ENCODE measurements at regions of chr14 and their contacts with region 1.

Region 1: DNA sequence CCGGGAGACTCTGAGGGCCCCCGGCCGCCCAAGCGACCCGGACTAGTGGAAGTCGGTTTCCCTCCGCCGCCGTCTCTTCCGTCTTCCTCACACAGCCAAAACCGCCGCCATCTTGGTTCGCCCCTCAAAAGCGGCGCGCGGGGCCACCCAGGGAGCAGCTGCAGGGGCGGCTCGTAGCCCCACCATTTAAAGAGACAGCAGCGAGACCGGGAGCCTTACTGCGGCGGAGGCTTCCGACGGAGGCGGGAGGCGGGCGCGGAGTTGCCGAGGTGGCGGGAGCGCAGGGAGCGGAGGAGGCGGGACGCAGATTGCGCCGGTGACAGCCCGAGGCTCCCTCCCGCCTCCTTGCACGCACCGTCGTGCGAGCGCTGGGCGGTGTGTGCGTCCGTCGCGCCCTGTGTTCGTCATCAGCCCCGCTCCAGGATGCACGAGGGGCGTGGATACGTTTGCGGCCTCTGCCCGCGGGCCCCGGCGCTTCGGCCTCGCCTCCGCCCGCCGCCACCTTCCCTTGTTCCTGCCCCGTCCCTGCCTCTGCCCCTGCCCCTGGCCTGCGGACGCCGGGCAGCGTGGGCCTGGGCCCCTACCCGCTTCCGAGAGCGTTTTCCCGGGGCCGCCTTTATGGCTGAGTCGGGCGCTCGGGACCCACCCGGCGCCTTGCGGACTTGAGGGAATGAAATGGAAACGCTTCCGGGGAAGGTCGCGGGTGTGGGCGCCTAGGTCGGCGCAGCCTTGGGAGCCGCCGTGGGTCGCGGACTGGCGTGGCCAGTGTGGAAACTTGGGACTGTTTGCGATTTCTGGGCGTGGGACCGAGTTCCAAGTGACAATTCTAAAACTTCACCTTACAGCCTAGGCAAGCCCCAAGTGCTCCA is at the start of gene PPP4R3A:
- DNase-seq: peak; percentile 95
- H3K4me3 Mint-ChIP-seq: peak within 1 kb of the TSS; percentile 99
- H3K27ac Mint-ChIP-seq: peak within 1 kb of the TSS; percentile 100
- H3K4me1 Mint-ChIP-seq: peaks cover 23% of the 10 kb centered on the region
- H3K27me3 Mint-ChIP-seq: no peaks in the 10 kb centered on the region
- total RNA-seq, gene PPP4R3A: 114 to 118 TPM

Region 2: GRCh38 chr14:91114079-91115065 is 396.0 kb before region 1 on chr14:
- CTCF ChIA-PET with region 1: no interaction called
- intact Hi-C with region 1: loop called (anchors 1 kb)
- DNase-seq: peak; percentile 82
- H3K4me3 Mint-ChIP-seq: peak overlapping the region; percentile 94
- H3K27ac Mint-ChIP-seq: peak overlapping the region; percentile 95
- H3K4me1 Mint-ChIP-seq: peaks cover 60% of the 10 kb centered on the region
- H3K27me3 Mint-ChIP-seq: no peaks in the 10 kb centered on the region

Region 3: DNA sequence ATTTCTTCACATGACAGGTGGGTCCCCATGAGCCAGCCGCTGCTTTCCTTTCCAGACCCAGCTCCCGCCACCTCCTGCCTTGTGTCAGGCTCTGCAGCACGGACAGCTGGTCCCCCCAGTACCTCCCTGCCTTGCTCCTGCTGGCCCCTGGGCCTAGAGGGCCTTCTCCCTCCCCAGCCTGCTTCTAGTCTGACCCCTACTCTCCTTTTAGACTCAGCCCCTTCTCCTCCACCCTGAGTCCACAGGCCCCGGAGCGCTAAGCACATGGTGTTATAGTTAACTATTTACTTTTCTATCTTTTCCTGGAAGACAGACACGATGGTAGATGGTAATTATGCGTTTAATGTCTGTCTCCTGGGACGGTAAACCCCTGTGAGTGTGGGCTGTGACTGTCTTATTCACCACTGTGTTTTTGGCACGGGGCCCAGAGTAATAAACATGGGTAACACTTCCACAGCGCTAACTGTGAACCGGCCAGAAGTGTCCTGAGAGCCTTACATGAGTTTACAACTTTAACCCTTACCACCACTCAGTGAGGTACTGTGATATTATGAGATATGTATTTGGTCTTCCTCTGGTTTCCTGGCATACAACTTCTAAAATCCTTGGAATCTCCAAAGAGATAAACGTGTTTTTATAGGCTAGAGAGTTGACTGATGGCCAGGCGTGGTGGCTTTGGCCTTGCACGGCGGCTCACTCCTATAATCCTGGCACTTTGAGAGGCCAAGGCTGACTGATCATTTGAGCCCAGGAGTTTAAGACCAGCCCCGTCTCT is 355.4 kb before region 1 on chr14:
- CTCF ChIA-PET with region 1: no interaction called
- intact Hi-C with region 1: no loop called
- DNase-seq: peak; percentile 13
- H3K4me3 Mint-ChIP-seq: no peak overlapping the region
- H3K27ac Mint-ChIP-seq: no peak overlapping the region
- H3K4me1 Mint-ChIP-seq: peaks cover 4% of the 10 kb centered on the region
- H3K27me3 Mint-ChIP-seq: no peaks in the 10 kb centered on the region

Region 4: GRCh38 chr14:91350813-91351511 is 159.4 kb before region 1 on chr14:
- CTCF ChIA-PET with region 1: no interaction called
- intact Hi-C with region 1: loop called (anchors 1 kb)
- DNase-seq: peak; percentile 82
- H3K4me3 Mint-ChIP-seq: peak overlapping the region; percentile 69
- H3K27ac Mint-ChIP-seq: peak overlapping the region; percentile 95
- H3K4me1 Mint-ChIP-seq: peaks cover 93% of the 10 kb centered on the region
- H3K27me3 Mint-ChIP-seq: no peaks in the 10 kb centered on the region

Region 5: DNA sequence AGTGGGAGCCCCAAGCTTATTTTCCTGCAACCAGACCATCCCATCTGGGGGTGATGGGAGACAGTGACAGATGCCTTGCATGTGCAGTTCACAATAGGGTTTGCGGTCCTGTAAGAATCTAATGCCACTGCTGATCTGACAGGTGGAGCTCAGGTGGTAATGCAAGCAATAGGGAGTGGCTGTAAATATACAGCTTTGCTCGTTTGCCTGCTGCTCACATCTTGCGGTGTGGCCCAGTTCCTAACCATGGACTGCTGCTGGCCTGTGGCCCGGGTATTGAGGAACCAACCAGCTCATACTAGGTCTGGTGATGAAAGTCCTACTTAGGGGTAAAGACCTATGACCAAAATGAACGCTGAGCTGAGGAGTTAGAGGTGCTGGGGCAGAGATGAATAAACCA is 56.7 kb before region 1 on chr14:
- CTCF ChIA-PET with region 1: no interaction called
- intact Hi-C with region 1: loop called (anchors 5 kb)
- DNase-seq: no peak
- H3K4me3 Mint-ChIP-seq: no peak overlapping the region
- H3K27ac Mint-ChIP-seq: no peak overlapping the region
- H3K4me1 Mint-ChIP-seq: peaks cover 28% of the 10 kb centered on the region
- H3K27me3 Mint-ChIP-seq: no peaks in the 10 kb centered on the region

Region 6: DNA sequence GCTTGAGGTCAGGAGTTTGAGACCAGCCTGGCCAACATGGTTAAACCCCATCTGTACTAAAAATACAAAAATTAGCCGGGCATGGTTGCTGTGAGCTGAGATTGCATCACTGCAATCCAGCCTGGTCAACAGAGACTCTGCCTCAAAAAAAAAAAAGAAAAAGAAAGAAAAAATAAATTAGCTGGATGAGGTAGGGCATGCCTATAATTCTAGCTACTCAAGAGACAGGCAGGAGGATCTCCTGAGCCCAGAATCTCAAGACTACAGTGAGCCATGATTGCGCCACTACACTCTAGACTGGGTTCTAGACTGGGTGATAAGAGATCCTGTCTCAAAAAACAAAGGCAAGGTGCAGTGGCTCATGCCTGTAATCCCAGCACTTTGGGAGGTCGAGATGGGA is 17.2 kb before region 1 on chr14:
- CTCF ChIA-PET with region 1: no interaction called
- intact Hi-C with region 1: loop called (anchors 2 kb)
- DNase-seq: no peak
- H3K4me3 Mint-ChIP-seq: no peak overlapping the region
- H3K27ac Mint-ChIP-seq: peak overlapping the region; percentile 30
- H3K4me1 Mint-ChIP-seq: peaks cover 67% of the 10 kb centered on the region
- H3K27me3 Mint-ChIP-seq: no peaks in the 10 kb centered on the region

Region 7: DNA sequence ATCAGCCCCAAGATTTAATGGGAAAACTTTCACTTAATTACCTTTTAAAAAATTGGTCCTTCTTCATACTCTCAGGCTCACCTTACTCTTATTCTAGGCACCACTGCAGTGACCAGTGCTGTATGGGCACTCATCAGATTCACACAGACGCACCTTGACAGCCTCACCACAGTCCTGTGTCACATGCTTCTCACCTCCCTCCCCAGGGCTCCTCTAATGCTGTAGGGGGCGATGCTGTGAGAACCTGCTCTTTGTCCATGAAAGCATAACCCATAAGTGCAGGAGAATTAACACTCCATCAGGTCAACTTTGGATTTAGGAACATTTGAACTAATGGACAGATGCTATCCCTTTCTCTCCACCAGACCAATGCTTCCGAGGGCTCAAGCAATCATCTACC is 13.6 kb after region 1 on chr14:
- CTCF ChIA-PET with region 1: no interaction called
- intact Hi-C with region 1: no loop called
- DNase-seq: no peak
- H3K4me3 Mint-ChIP-seq: no peak overlapping the region
- H3K27ac Mint-ChIP-seq: no peak overlapping the region
- H3K4me1 Mint-ChIP-seq: no peaks in the 10 kb centered on the region
- H3K27me3 Mint-ChIP-seq: no peaks in the 10 kb centered on the region

Region 8: GRCh38 chr14:91836119-91836881 is 325.9 kb after region 1 on chr14:
- CTCF ChIA-PET with region 1: no interaction called
- intact Hi-C with region 1: loop called (anchors 1 kb)
- DNase-seq: peak; percentile 92
- H3K4me3 Mint-ChIP-seq: peak overlapping the region; percentile 94
- H3K27ac Mint-ChIP-seq: peak overlapping the region; percentile 84
- H3K4me1 Mint-ChIP-seq: peaks cover 70% of the 10 kb centered on the region
- H3K27me3 Mint-ChIP-seq: no peaks in the 10 kb centered on the region

Region 9: GRCh38 chr14:92039719-92040430 is 529.5 kb after region 1 on chr14 and contains the start of gene TRIP11:
- CTCF ChIA-PET with region 1: no interaction called
- intact Hi-C with region 1: loop called (anchors 1 kb)
- DNase-seq: peak; percentile 97
- H3K4me3 Mint-ChIP-seq: peak within 1 kb of the TSS; percentile 98
- H3K27ac Mint-ChIP-seq: peak within 1 kb of the TSS; percentile 98
- H3K4me1 Mint-ChIP-seq: peaks cover 32% of the 10 kb centered on the region
- H3K27me3 Mint-ChIP-seq: no peaks in the 10 kb centered on the region
- total RNA-seq, gene TRIP11: 22.7 to 26.1 TPM

Measured in activated naive CD4-positive, alpha-beta T cell treated with anti-CD3 and anti-CD28 coated beads for 36 hours (primary cell).